ENCODE measurements at regions of chr20 and their contacts with region 1.

Region 1: DNA sequence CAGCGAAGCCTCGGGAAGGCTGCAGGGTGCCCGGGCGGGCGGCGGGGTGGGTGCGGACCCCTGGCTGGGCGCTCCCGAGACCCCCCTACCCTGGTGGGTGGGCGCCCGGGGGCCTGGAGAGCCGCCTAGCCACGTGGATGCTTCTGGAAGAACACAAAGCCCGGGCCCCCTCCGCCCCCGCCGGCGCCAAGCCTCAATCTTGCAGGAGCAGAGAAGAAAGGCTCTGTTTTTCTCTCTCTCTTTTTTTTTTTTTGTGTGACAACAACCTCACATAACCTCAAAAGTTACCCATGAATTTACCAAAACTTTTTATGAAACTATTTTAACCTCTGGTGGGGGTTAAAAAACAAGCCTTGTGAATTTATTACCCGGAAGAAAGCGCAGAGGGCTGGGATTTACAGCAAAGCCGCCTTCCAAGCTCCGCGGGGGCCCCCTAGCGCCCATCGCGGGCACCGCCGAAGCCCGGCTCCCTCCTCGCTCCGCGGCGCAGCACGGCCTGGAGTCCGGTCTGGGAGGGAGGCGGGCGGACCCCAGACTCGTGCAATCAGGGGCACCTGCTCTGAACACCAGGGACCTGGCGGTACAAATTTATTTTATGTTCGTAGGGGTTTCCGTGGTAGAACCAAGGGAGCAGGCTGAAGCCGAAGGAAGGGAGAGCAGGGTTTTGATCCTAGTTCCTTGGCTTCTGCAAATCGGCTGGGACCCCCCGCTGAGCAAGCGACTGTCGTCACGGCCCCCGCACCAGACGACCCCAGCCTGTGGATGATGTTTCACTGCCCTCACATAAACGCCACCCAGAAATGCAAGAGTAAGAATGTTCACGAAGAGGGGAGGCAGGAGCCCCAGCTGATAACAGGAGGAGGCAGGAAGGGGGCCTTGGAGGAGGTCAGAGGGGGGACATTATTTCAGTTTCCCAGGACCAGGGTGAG is 58.9 kb downstream of the ZNF831 start:
- DNase-seq: peak; percentile 83
- ATAC-seq: peak; percentile 97
- H3K4me3 ChIP-seq: peak overlapping the region; percentile 46 to 93 (median 54)
- H3K4me3 Mint-ChIP-seq: peak overlapping the region; percentile 88
- H3K27ac ChIP-seq: peak overlapping the region in 1 of 2 donors; percentile 60
- H3K27ac Mint-ChIP-seq: peak overlapping the region; percentile 60
- H3K4me1 ChIP-seq: peaks cover 12 to 15% of the 10 kb centered on the region in 2 donors
- H3K4me1 Mint-ChIP-seq: peaks cover 10% of the 10 kb centered on the region
- H3K27me3 ChIP-seq: peaks cover 0 to 18% (median 6%) of the 10 kb centered on the region in 4 experiments
- H3K27me3 Mint-ChIP-seq: peaks cover 16% of the 10 kb centered on the region
- CTCF ChIP-seq: peak; percentile 97

Region 2: DNA sequence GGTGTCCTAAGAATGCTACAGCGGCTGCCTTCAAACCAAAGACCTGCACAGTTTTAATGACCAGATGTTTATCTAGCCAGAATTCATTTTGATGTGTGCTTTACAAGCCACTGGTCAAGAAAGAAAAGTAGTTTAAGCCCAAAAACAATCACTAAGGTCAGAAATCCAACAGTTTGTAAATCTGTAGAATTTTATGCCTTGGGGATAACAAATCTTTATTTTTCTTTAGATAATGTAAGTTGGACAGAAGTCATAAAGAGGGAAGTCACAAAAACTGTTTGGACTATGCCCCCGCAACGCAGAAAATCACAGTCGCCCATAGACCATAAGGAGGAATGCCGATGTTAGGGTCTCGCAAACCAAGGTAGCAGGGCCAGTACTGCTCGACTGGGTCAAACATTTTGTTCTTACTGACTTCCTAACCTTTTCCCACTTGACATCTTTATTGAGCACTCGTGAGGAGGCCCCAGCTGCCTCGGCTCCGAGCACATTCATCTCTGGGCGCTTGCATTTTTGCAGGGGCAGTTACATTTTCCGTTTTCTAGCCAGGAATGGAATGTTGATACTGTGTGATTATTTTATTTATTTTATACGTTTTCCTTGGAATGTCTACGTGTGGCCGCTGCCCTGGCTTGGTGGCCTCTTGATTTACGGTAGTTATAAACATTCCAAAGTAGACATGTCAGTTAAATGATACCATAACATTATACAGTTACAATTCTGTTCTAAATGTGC is 650.7 kb before region 1 on chr20:
- CTCF ChIA-PET with region 1: no interaction called
- POLR2A ChIA-PET with region 1: no interaction called
- intact Hi-C with region 1: no loop called
- DNase-seq: no peak
- ATAC-seq: no peak
- H3K4me3 ChIP-seq: no peak overlapping the region
- H3K4me3 Mint-ChIP-seq: no peak overlapping the region
- H3K27ac ChIP-seq: no peak overlapping the region
- H3K27ac Mint-ChIP-seq: no peak overlapping the region
- H3K4me1 ChIP-seq: no peaks in the 10 kb centered on the region
- H3K4me1 Mint-ChIP-seq: no peaks in the 10 kb centered on the region
- H3K27me3 ChIP-seq: no peaks in the 10 kb centered on the region
- H3K27me3 Mint-ChIP-seq: peaks cover 31% of the 10 kb centered on the region
- CTCF ChIP-seq: no peak

Region 3: DNA sequence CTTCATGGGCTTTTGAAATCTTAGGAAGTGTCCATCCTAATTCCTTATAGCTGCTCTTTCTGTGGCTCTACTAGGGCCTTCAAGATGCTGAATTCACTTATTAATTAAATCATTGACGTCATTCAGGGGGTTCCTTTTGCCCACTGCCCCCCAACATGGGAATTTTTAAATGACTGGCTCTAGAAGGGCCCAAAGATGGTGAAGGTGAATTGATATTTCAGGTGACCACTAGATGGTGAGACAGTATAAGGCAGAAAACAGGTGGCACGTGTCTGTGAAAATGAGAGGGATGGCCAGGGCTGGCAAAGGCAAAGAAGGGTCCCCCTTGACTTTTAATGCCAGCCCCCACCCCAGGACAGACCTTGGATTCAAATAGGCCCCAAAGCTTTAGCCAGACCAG is 358.2 kb before region 1 on chr20:
- CTCF ChIA-PET with region 1: interaction called, 57 read pairs
- POLR2A ChIA-PET with region 1: no interaction called
- intact Hi-C with region 1: no loop called
- DNase-seq: peak; percentile 48
- ATAC-seq: no peak
- H3K4me3 ChIP-seq: no peak overlapping the region
- H3K4me3 Mint-ChIP-seq: no peak overlapping the region
- H3K27ac ChIP-seq: no peak overlapping the region
- H3K27ac Mint-ChIP-seq: no peak overlapping the region
- H3K4me1 ChIP-seq: peaks cover 0 to 2% of the 10 kb centered on the region in 2 donors
- H3K4me1 Mint-ChIP-seq: no peaks in the 10 kb centered on the region
- H3K27me3 ChIP-seq: peaks cover 0 to 10% (median 3%) of the 10 kb centered on the region in 4 experiments
- H3K27me3 Mint-ChIP-seq: peaks cover 22% of the 10 kb centered on the region
- CTCF ChIP-seq: peak; percentile 55

Region 4: DNA sequence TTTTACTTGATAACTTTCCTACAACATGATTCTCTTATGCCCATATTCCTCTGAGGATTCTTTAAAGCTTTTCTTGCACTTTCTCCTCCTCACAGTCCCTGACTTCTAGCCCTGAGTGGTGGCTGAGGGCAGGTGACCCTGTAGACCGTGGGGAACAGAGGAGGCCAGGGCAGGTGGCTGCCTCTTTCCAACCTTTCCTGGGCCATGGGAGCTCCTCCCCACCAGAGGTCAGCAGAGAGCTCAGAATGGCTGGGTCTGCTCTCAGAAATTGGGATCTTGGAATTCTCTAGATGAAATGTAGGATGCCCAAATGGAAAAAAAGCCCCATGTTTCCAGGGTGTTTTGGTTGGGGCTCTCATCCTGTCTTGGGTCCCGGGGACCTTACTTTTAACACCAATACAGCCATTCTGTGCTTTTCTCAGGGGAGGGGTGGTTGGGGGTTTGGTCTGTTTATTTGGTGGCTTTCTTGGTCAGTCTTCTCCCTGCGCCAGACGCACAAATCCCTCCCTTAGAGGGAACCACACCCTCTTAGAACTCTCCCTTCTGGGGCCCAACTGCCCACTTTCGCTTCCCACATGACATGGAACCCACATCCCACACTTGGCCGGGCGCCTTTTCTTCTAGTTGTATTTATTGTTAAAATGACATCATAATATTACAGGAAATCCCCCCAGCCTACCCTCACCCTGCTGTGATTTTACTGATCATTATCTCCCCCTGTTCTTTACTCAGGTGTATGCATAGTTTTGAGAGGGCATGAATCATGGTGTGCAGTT is 352.1 kb before region 1 on chr20:
- CTCF ChIA-PET with region 1: interaction called, 57 read pairs
- POLR2A ChIA-PET with region 1: no interaction called
- intact Hi-C with region 1: loop called (anchors 1 kb)
- DNase-seq: peak; percentile 69
- ATAC-seq: peak; percentile 78
- H3K4me3 ChIP-seq: no peak overlapping the region
- H3K4me3 Mint-ChIP-seq: no peak overlapping the region
- H3K27ac ChIP-seq: no peak overlapping the region
- H3K27ac Mint-ChIP-seq: no peak overlapping the region
- H3K4me1 ChIP-seq: peaks cover 5 to 9% of the 10 kb centered on the region in 2 donors
- H3K4me1 Mint-ChIP-seq: peaks cover 12% of the 10 kb centered on the region
- H3K27me3 ChIP-seq: peaks cover 0 to 4% (median 1%) of the 10 kb centered on the region in 4 experiments
- H3K27me3 Mint-ChIP-seq: peaks cover 8% of the 10 kb centered on the region
- CTCF ChIP-seq: peak; percentile 78

Region 5: DNA sequence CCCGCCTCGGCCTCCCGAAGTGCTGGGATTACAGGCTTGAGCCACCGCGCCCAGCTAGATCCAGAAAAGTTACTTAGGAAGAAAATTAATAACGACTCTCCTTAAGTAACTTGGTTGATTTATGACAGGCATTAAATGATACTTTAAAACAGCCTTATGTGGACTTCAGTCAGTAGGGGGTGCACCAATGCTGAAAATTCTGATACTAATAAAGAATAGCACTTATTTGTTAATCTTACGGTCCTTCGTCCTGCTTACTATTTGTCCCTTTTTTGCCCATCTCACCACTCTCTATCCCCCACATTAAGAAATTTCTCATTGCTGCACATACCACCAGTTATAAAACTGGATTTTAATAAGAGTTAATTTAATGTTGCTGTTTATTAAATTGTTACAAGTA is 167.2 kb before region 1 on chr20:
- CTCF ChIA-PET with region 1: interaction called, 11 read pairs
- POLR2A ChIA-PET with region 1: no interaction called
- intact Hi-C with region 1: loop called (anchors 1 kb)
- DNase-seq: peak; percentile 59
- ATAC-seq: peak; percentile 28
- H3K4me3 ChIP-seq: no peak overlapping the region
- H3K4me3 Mint-ChIP-seq: no peak overlapping the region
- H3K27ac ChIP-seq: no peak overlapping the region
- H3K27ac Mint-ChIP-seq: no peak overlapping the region
- H3K4me1 ChIP-seq: no peaks in the 10 kb centered on the region
- H3K4me1 Mint-ChIP-seq: no peaks in the 10 kb centered on the region
- H3K27me3 ChIP-seq: peaks cover 0 to 17% (median 9%) of the 10 kb centered on the region in 4 experiments
- H3K27me3 Mint-ChIP-seq: peaks cover 38% of the 10 kb centered on the region
- CTCF ChIP-seq: peak; percentile 67

Region 6: DNA sequence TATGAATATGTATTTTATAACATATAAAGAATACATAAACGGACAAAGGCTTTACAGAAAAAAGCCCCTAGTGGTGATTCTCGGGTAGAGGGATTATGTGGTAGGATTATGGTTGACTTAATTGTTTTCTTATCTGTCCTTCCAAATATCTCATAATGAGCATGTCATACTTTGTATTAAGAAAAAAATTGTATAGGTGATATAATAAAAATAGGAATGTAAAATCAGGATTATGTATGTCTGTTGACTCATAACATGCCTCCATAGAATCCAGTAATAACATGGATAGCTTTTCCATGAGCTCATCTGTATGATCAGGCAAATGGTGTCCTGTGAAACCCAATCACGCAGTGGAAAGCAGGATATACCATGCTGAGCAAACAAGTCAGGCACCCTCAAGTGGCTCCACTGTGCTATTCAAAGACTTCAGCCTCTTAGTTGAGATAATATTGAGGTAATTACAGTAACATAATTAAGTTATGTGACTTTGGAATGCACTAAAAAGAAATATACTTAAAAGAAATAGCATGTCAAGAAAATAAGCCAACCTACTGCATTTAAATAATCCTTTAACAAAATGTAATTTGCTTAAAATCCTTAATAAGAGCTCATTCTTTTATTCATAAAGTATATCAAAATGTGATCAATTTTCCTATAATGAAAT is 140.3 kb before region 1 on chr20:
- CTCF ChIA-PET with region 1: interaction called, 94 read pairs
- POLR2A ChIA-PET with region 1: no interaction called
- intact Hi-C with region 1: no loop called
- DNase-seq: peak; percentile 35
- ATAC-seq: no peak
- H3K4me3 ChIP-seq: no peak overlapping the region
- H3K4me3 Mint-ChIP-seq: no peak overlapping the region
- H3K27ac ChIP-seq: no peak overlapping the region
- H3K27ac Mint-ChIP-seq: no peak overlapping the region
- H3K4me1 ChIP-seq: peaks cover 3 to 7% of the 10 kb centered on the region in 2 donors
- H3K4me1 Mint-ChIP-seq: peaks cover 7% of the 10 kb centered on the region
- H3K27me3 ChIP-seq: peaks cover 0 to 16% (median 0%) of the 10 kb centered on the region in 4 experiments
- H3K27me3 Mint-ChIP-seq: peaks cover 29% of the 10 kb centered on the region
- CTCF ChIP-seq: peak; percentile 69

Region 7: DNA sequence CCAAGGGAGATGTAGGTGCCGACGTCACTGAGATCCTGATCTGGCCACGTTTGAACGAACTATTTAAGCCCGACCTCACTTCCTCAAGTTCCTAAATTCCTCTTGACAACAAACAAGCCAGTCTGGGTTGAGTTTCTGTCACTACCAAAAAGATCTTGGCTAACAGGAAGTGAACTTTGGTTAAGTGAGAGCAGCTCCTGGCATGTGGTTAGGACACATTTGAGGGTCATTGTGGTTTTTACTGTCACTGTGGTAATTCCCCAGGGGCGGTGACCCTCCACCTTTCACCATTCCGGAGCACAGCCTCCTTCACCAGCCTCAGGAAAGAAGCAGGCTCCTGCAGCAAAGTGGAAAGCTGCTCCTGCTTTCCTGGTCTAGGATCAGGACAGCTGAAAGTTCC is 102.0 kb before region 1 on chr20:
- CTCF ChIA-PET with region 1: interaction called, 25 read pairs
- POLR2A ChIA-PET with region 1: interaction called, 3 read pairs
- intact Hi-C with region 1: no loop called
- DNase-seq: peak; percentile 48
- ATAC-seq: no peak
- H3K4me3 ChIP-seq: no peak overlapping the region
- H3K4me3 Mint-ChIP-seq: peak overlapping the region; percentile 91
- H3K27ac ChIP-seq: no peak overlapping the region
- H3K27ac Mint-ChIP-seq: peak overlapping the region; percentile 98
- H3K4me1 ChIP-seq: peaks cover 58 to 60% of the 10 kb centered on the region in 2 donors
- H3K4me1 Mint-ChIP-seq: peaks cover 68% of the 10 kb centered on the region
- H3K27me3 ChIP-seq: no peaks in the 10 kb centered on the region
- H3K27me3 Mint-ChIP-seq: no peaks in the 10 kb centered on the region
- CTCF ChIP-seq: no peak

Region 8: GRCh38 chr20:59403261-59403961 is 180.9 kb after region 1 on chr20:
- CTCF ChIA-PET with region 1: no interaction called
- POLR2A ChIA-PET with region 1: no interaction called
- intact Hi-C with region 1: loop called (anchors 10 kb)
- DNase-seq: peak; percentile 56
- ATAC-seq: peak; percentile 45
- H3K4me3 ChIP-seq: no peak overlapping the region
- H3K4me3 Mint-ChIP-seq: no peak overlapping the region
- H3K27ac ChIP-seq: no peak overlapping the region
- H3K27ac Mint-ChIP-seq: no peak overlapping the region
- H3K4me1 ChIP-seq: peaks cover 18 to 20% of the 10 kb centered on the region in 2 donors
- H3K4me1 Mint-ChIP-seq: peaks cover 5% of the 10 kb centered on the region
- H3K27me3 ChIP-seq: peaks cover 0 to 52% (median 30%) of the 10 kb centered on the region in 4 experiments
- H3K27me3 Mint-ChIP-seq: peaks cover 34% of the 10 kb centered on the region
- CTCF ChIP-seq: peak; percentile 88

Measured in B cell (primary cell).